Tibial artery (tissue), 4 donors: ENCODE measurements at regions of chr15 and their contacts with region 1.

Region 1: DNA sequence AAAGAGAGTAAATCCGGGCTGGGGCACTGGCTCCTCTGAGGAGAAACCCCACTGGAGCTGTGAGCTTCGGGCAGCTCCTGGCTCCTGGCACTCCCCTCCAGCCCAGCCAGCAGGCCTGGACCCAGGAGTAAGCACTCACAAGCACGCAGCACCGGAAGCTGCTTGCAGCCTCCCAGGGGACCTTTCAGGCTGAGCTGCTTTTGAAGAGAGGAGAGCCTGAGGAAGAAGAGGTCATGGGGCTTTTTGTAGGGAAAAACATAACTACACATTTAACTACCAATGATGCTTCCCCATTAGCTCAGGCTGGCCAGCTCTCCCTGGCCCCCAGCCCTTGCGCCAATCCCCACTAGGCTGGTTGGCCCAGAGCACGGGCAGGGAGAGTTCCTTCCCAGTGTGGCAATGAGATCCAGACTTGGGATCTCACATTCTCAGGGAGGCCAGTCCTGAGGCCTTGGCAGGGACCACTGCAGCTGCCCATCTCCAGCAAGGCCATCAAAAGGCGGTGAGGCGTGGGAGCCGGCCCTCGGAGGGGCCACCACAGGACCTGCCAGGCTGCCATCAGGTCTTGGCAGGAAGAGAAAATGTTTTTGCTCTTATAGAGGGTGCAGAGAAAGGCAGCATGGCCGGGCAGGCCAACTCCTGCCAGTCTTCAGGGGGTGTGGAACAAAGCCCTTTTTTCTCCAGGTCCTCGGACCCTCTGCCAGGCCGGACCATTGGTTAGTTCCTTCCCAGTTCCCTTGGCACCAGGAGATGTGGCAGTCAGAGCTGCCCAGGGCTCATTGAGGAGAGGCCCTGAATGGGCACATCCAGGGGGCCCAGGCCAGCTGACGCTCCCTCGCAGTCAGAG is 41.5 kb upstream of the MFGE8 start:
- DNase-seq: peak; percentile 68 to 94
- H3K4me3 ChIP-seq: no peak overlapping the region
- H3K27ac ChIP-seq: peak overlapping the region; percentile 81 to 83
- H3K4me1 ChIP-seq: peaks cover 5 to 20% (median 13%) of the 10 kb centered on the region in 4 donors
- H3K27me3 ChIP-seq: no peaks in the 10 kb centered on the region
- CTCF ChIP-seq: no peak

Region 2: GRCh38 chr15:88920186-88920891 is 34.3 kb before region 1 on chr15:
- intact Hi-C with region 1: loop called (anchors 5 kb)
- DNase-seq: no peak
- H3K4me3 ChIP-seq: no peak overlapping the region
- H3K27ac ChIP-seq: peak overlapping the region in 1 of 2 donors; percentile 26
- H3K4me1 ChIP-seq: peaks cover 0 to 33% (median 3%) of the 10 kb centered on the region in 4 donors
- H3K27me3 ChIP-seq: no peaks in the 10 kb centered on the region
- CTCF ChIP-seq: no peak